ENCODE measurements at regions of chr12 and their contacts with region 1.

Region 1: GRCh38 chr12:94145191-94145983 is 3.0 kb upstream of the PLXNC1 start:
- DNase-seq: no peak
- H3K4me3 ChIP-seq: no peak overlapping the region
- H3K27me3 ChIP-seq: peaks cover 31% of the 10 kb centered on the region
- CTCF ChIP-seq: peak; percentile 49

Region 2: DNA sequence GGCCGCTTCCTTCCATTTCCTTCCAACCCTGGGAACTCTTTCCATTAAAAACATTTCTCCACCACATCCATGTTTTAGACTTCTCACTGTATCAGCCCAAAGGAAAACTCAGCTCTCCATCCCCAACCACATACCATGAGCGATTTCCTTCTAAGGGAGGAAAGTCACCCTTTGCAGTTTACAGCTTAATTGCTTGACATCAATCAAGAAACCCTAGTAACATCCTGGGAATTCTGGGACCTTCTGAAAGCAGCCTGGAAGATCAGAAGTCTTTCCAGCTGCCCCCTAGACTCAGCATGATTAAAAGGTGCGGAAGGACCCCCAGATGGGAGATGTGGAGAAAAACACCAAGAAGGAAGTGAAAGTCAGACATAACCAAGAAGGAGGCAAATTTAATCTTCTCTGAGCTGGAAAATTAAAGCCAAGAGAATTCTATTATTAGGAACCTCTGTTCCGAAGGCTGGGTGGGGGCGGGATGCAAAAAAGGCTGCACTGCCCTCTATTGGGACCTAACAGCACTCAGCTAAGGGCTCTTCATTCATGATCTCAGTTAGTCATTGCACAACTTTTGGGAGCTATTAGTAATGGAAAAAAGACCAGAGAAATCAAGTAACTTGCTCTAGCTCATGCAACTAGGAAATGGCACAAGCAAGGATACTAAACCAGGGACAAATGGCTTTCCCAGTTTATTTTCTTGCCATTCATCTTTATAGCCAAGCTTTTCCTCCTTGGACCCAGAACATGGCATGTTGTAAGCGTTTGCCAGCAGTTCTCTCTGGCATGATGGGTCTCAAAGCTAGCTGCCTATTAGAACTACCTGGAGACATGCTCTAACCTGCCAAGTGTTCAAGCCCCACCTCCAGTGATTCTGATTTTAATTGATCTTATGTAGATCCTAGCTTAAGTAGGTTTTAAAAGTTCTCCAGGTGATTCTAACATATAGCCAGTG is 70.1 kb before region 1 on chr12:
- CTCF ChIA-PET with region 1: no interaction called
- POLR2A ChIA-PET with region 1: no interaction called
- DNase-seq: peak; percentile 63
- H3K4me3 ChIP-seq: no peak overlapping the region
- H3K27me3 ChIP-seq: no peaks in the 10 kb centered on the region
- CTCF ChIP-seq: peak; percentile 87

Region 3: GRCh38 chr12:94133964-94134795 is 11.2 kb before region 1 on chr12:
- CTCF ChIA-PET with region 1: interaction called, 29 read pairs
- POLR2A ChIA-PET with region 1: no interaction called
- DNase-seq: peak; percentile 17
- H3K4me3 ChIP-seq: no peak overlapping the region
- H3K27me3 ChIP-seq: peaks cover 1% of the 10 kb centered on the region; the same call in 1 of the 2 replicates
- CTCF ChIP-seq: peak; percentile 67

Region 4: DNA sequence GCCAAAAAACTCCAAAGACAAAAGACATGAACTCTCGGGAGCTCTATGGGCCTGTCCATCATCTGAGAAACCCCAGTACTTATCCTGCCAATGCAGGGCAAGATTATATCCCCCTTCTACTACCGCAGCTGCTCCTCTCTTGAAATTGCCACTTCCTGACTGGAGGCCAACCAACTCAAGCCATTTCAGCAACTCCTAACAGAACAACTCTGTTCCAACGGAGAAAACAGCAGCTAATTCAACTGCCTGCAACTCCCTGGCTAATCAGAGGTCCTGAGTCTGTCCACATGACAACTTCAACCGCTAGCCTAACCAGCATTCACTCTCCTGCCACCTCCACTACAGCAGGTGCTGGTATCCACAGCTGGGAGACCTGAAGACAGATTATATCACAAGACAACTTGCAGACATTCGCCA is 290.1 kb after region 1 on chr12:
- CTCF ChIA-PET with region 1: interaction called, 44 read pairs
- POLR2A ChIA-PET with region 1: no interaction called
- DNase-seq: no peak
- H3K4me3 ChIP-seq: no peak overlapping the region
- H3K27me3 ChIP-seq: no peaks in the 10 kb centered on the region
- CTCF ChIP-seq: no peak

Region 5: GRCh38 chr12:94532490-94533422 is 387.4 kb after region 1 on chr12:
- CTCF ChIA-PET with region 1: interaction called, 29 read pairs
- POLR2A ChIA-PET with region 1: no interaction called
- DNase-seq: peak; percentile 2
- H3K4me3 ChIP-seq: no peak overlapping the region
- H3K27me3 ChIP-seq: peaks cover 3% of the 10 kb centered on the region; the same call in 1 of the 2 replicates
- CTCF ChIP-seq: peak; percentile 81